Activated CD4-positive, alpha-beta T cell treated with anti-CD3 and anti-CD28 coated beads for 36 hours (primary cell): ENCODE measurements at regions of chr1 and their contacts with region 1.

Region 1: GRCh38 chr1:24391882-24392603 is 21.5 kb downstream of the STPG1 start:
- DNase-seq: peak; percentile 86
- ATAC-seq: peak; percentile 83
- H3K4me3 Mint-ChIP-seq: peak overlapping the region; percentile 52
- H3K27ac Mint-ChIP-seq: peak overlapping the region; percentile 85
- H3K4me1 Mint-ChIP-seq: peaks cover 39% of the 10 kb centered on the region
- H3K27me3 Mint-ChIP-seq: no peaks in the 10 kb centered on the region

Region 2: GRCh38 chr1:23777979-23778814 is 613.8 kb before region 1 on chr1 and contains the start of gene PITHD1:
- CTCF ChIA-PET with region 1: no interaction called
- POLR2A ChIA-PET with region 1: no interaction called
- intact Hi-C with region 1: loop called in 1 of 2 experiments (anchors 10 kb)
- DNase-seq: peak; percentile 90
- ATAC-seq: peak; percentile 87
- H3K4me3 Mint-ChIP-seq: peak within 1 kb of the TSS; percentile 87
- H3K27ac Mint-ChIP-seq: peak within 1 kb of the TSS; percentile 87
- H3K4me1 Mint-ChIP-seq: peaks cover 43% of the 10 kb centered on the region
- H3K27me3 Mint-ChIP-seq: no peaks in the 10 kb centered on the region
- total RNA-seq, gene PITHD1: 53.1 to 64.1 TPM

Region 3: GRCh38 chr1:24150234-24151174 is 241.5 kb before region 1 on chr1:
- CTCF ChIA-PET with region 1: interaction called, 53 read pairs
- POLR2A ChIA-PET with region 1: interaction called, 7 read pairs
- intact Hi-C with region 1: loop called (anchors 1 kb)
- DNase-seq: peak; percentile 94
- ATAC-seq: peak; percentile 92
- H3K4me3 Mint-ChIP-seq: peak overlapping the region; percentile 34
- H3K27ac Mint-ChIP-seq: no peak overlapping the region
- H3K4me1 Mint-ChIP-seq: peaks cover 19% of the 10 kb centered on the region
- H3K27me3 Mint-ChIP-seq: peaks cover 18% of the 10 kb centered on the region

Region 4: DNA sequence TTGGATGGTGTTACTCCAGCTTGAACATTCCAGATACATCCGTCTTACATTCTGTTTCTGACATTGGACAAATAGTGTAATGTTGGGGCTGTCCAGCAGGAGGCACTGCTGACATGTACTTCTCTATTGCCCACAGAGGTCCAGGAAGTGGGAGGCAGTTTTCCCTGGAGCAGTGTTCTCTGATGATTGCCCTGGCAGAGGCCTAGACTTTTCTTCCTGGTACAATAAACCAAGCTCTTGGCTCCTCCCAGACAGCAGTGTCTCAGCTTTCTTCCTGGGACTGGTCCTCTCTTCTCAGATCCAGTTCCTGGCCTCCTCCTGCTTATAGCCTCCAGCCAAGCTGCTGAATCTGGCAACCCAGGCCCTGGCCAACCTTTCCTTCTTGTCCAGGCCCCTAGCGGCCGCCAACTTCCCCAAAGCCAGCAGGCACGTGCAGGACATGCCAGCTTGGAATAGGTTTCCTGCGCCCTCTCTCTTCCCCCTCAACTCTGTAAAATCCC is 190.1 kb before region 1 on chr1:
- CTCF ChIA-PET with region 1: interaction called, 335 read pairs
- POLR2A ChIA-PET with region 1: interaction called, 6 read pairs
- intact Hi-C with region 1: loop called (anchors 1 kb)
- DNase-seq: peak; percentile 78
- ATAC-seq: no peak
- H3K4me3 Mint-ChIP-seq: no peak overlapping the region
- H3K27ac Mint-ChIP-seq: no peak overlapping the region
- H3K4me1 Mint-ChIP-seq: peaks cover 27% of the 10 kb centered on the region
- H3K27me3 Mint-ChIP-seq: peaks cover 2% of the 10 kb centered on the region

Region 5: GRCh38 chr1:24321697-24322469 is 70.2 kb before region 1 on chr1:
- CTCF ChIA-PET with region 1: interaction called, 15 read pairs
- POLR2A ChIA-PET with region 1: interaction called, 3 read pairs
- intact Hi-C with region 1: loop called in 1 of 2 experiments (anchors 1 kb)
- DNase-seq: peak; percentile 87
- ATAC-seq: peak; percentile 76
- H3K4me3 Mint-ChIP-seq: peak overlapping the region; percentile 62
- H3K27ac Mint-ChIP-seq: peak overlapping the region; percentile 51
- H3K4me1 Mint-ChIP-seq: peaks cover 40% of the 10 kb centered on the region
- H3K27me3 Mint-ChIP-seq: peaks cover 70% of the 10 kb centered on the region

Region 6: GRCh38 chr1:24364975-24365678 is 26.9 kb before region 1 on chr1:
- CTCF ChIA-PET with region 1: interaction called, 16 read pairs
- POLR2A ChIA-PET with region 1: no interaction called
- intact Hi-C with region 1: loop called in 1 of 2 experiments (anchors 2 kb)
- DNase-seq: peak; percentile 63
- ATAC-seq: peak; percentile 99
- H3K4me3 Mint-ChIP-seq: no peak overlapping the region
- H3K27ac Mint-ChIP-seq: no peak overlapping the region
- H3K4me1 Mint-ChIP-seq: peaks cover 14% of the 10 kb centered on the region
- H3K27me3 Mint-ChIP-seq: peaks cover 3% of the 10 kb centered on the region

Region 7: GRCh38 chr1:24586970-24587820 is 195.2 kb after region 1 on chr1:
- CTCF ChIA-PET with region 1: interaction called, 43 read pairs
- POLR2A ChIA-PET with region 1: interaction called, 4 read pairs
- intact Hi-C with region 1: loop called in 1 of 2 experiments (anchors 1 kb)
- DNase-seq: peak; percentile 75
- ATAC-seq: peak; percentile 100
- H3K4me3 Mint-ChIP-seq: no peak overlapping the region
- H3K27ac Mint-ChIP-seq: peak overlapping the region; percentile 55
- H3K4me1 Mint-ChIP-seq: peaks cover 6% of the 10 kb centered on the region
- H3K27me3 Mint-ChIP-seq: peaks cover 3% of the 10 kb centered on the region